PC-3 (cell line): ENCODE measurements at regions of chr6 and their contacts with region 1.

Region 1: GRCh38 chr6:44096612-44097011 is 30.6 kb downstream of the MRPL14 start:
- DNase-seq: peak; percentile 89
- ATAC-seq: peak; percentile 85
- H3K4me3 ChIP-seq: no peak overlapping the region
- H3K27ac ChIP-seq: no peak overlapping the region
- H3K4me1 ChIP-seq: no peaks in the 10 kb centered on the region
- H3K27me3 ChIP-seq: no peaks in the 10 kb centered on the region
- CTCF ChIP-seq: peak; percentile 89

Region 2: GRCh38 chr6:44058617-44059358 is 37.8 kb before region 1 on chr6:
- CTCF ChIA-PET with region 1: no interaction called
- POLR2A ChIA-PET with region 1: no interaction called
- intact Hi-C with region 1: no loop called
- DNase-seq: peak; percentile 98
- ATAC-seq: peak; percentile 87
- H3K4me3 ChIP-seq: no peak overlapping the region
- H3K27ac ChIP-seq: peak overlapping the region; percentile 97
- H3K4me1 ChIP-seq: peaks cover 57% of the 10 kb centered on the region
- H3K27me3 ChIP-seq: no peaks in the 10 kb centered on the region
- CTCF ChIP-seq: no peak

Region 3: GRCh38 chr6:44151348-44152108 is 54.9 kb after region 1 on chr6:
- CTCF ChIA-PET with region 1: interaction called, 3 read pairs
- POLR2A ChIA-PET with region 1: no interaction called
- intact Hi-C with region 1: loop called (anchors 1 kb)
- DNase-seq: peak; percentile 70
- ATAC-seq: peak; percentile 85
- H3K4me3 ChIP-seq: no peak overlapping the region
- H3K27ac ChIP-seq: no peak overlapping the region
- H3K4me1 ChIP-seq: no peaks in the 10 kb centered on the region
- H3K27me3 ChIP-seq: no peaks in the 10 kb centered on the region
- CTCF ChIP-seq: peak; percentile 98

Region 4: GRCh38 chr6:44179072-44179536 is 82.5 kb after region 1 on chr6:
- CTCF ChIA-PET with region 1: interaction called, 10 read pairs
- POLR2A ChIA-PET with region 1: no interaction called
- intact Hi-C with region 1: no loop called
- DNase-seq: peak; percentile 40
- ATAC-seq: peak; percentile 59
- H3K4me3 ChIP-seq: no peak overlapping the region
- H3K27ac ChIP-seq: 0 out of 2 replicates have a peak overlapping the region, but pooled peaks have one; percentile 7
- H3K4me1 ChIP-seq: peaks cover 17% of the 10 kb centered on the region
- H3K27me3 ChIP-seq: no peaks in the 10 kb centered on the region
- CTCF ChIP-seq: no peak

Region 5: DNA sequence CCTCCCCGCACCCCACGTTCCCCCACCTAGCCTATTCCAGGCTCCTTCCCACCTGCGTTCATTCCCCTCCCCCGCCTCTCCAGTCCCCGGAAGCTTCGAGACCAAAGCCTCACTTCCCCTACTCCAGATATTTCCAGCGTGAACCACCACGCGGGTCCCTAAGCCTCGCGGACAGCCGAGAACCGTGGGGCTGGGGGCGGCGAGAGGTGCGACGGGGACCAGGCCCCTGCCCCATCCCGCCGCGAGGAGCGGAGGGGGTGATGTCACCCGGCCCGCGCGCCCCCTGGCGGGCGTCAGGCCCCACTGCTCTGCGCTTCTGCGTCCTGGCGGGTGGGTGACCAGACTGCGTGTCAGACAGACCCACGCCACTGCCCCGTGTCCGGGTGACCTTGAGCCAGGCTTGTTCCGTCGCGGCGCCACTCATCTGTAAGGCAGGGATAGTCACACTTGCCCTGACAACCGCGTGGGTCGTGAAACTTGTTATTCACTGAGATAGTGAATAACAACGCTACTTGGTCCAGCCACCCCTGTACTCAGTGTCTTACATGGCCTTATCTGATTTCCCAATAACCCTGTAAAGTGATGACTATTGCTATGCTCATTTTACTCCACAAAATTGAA is 141.3 kb after region 1 on chr6:
- CTCF ChIA-PET with region 1: interaction called, 3 read pairs
- POLR2A ChIA-PET with region 1: no interaction called
- intact Hi-C with region 1: loop called (anchors 5 kb)
- DNase-seq: peak; percentile 77
- ATAC-seq: peak; percentile 63
- H3K4me3 ChIP-seq: peak overlapping the region; percentile 75
- H3K27ac ChIP-seq: peak overlapping the region; percentile 73
- H3K4me1 ChIP-seq: peaks cover 39% of the 10 kb centered on the region
- H3K27me3 ChIP-seq: no peaks in the 10 kb centered on the region
- CTCF ChIP-seq: peak; percentile 97

Region 6: GRCh38 chr6:44338228-44339122 is 241.9 kb after region 1 on chr6:
- CTCF ChIA-PET with region 1: no interaction called
- POLR2A ChIA-PET with region 1: no interaction called
- intact Hi-C with region 1: loop called (anchors 2 kb)
- DNase-seq: peak; percentile 80
- ATAC-seq: peak; percentile 73
- H3K4me3 ChIP-seq: no peak overlapping the region
- H3K27ac ChIP-seq: no peak overlapping the region
- H3K4me1 ChIP-seq: peaks cover 5% of the 10 kb centered on the region; the same call in 1 of the 2 replicates
- H3K27me3 ChIP-seq: peaks cover 10% of the 10 kb centered on the region; the same call in 1 of the 2 replicates
- CTCF ChIP-seq: peak; percentile 88

Region 7: GRCh38 chr6:44353336-44353735 is 256.7 kb after region 1 on chr6:
- CTCF ChIA-PET with region 1: no interaction called
- POLR2A ChIA-PET with region 1: no interaction called
- intact Hi-C with region 1: no loop called
- DNase-seq: peak; percentile 42
- ATAC-seq: peak; percentile 95
- H3K4me3 ChIP-seq: no peak overlapping the region
- H3K27ac ChIP-seq: no peak overlapping the region
- H3K4me1 ChIP-seq: peaks cover 6% of the 10 kb centered on the region
- H3K27me3 ChIP-seq: 0 out of 2 replicates have a peak, but pooled peaks cover 8% of the 10 kb centered on the region
- CTCF ChIP-seq: no peak